Tibial artery (tissue), 4 donors: ENCODE measurements at regions of chr17 and their contacts with region 1.

Region 1: DNA sequence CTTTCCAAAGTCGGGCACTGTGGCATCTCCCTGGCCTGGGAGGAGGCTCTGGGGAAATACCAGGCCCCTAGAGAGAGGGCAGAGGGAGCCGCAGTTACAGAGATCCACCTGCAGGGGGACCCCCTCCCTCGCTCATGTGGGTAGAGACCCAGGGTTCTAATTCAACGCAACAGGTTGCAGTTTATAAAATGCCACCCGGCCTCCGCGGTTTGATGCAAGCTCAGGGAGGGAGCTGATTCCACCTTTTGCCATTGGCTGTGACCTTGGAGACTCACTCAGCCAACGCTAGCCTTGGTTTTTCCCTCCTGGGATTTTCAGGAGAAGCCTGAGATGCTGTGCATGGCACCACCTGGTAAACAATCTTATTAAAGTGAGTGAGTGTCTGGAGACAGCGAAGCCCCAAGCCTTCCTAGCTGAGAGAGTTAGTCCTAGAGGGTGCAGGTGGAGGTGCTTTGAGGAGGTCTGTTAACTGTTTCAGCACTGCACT is 12.1 kb downstream of the TTLL6 start:
- DNase-seq: peak; percentile 38 to 76
- H3K4me3 ChIP-seq: no peak overlapping the region
- H3K27ac ChIP-seq: no peak overlapping the region
- H3K4me1 ChIP-seq: no peaks in the 10 kb centered on the region
- H3K27me3 ChIP-seq: peaks cover 0 to 26% of the 10 kb centered on the region in 2 donors
- CTCF ChIP-seq: peak; percentile 93 to 95

Region 2: DNA sequence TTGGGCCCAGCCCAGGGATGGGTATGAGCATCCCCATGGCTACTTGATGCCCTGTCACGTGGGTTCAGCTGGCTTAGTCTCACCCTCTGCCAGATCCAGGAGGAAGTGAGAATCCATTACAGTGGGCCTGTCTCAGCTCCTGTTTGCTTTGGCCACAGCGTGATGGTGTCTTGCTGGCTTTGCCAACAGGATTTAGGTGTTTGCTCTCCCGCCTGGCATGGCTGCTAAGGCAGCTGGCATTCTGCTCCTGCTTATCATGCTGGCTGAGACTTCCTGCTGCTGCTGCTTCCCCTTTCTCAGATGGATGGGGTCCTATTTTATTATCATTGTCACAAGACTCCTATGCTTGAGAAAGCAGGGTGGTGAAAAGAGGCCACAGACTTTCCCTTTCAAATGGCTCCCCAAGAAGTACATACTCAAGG is 48.1 kb before region 1 on chr17:
- intact Hi-C with region 1: no loop called
- DNase-seq: no peak
- H3K4me3 ChIP-seq: no peak overlapping the region
- H3K27ac ChIP-seq: no peak overlapping the region
- H3K4me1 ChIP-seq: peaks cover 0 to 19% (median 10%) of the 10 kb centered on the region in 4 donors
- H3K27me3 ChIP-seq: peaks cover 10 to 99% of the 10 kb centered on the region in 2 donors
- CTCF ChIP-seq: no peak

Region 3: DNA sequence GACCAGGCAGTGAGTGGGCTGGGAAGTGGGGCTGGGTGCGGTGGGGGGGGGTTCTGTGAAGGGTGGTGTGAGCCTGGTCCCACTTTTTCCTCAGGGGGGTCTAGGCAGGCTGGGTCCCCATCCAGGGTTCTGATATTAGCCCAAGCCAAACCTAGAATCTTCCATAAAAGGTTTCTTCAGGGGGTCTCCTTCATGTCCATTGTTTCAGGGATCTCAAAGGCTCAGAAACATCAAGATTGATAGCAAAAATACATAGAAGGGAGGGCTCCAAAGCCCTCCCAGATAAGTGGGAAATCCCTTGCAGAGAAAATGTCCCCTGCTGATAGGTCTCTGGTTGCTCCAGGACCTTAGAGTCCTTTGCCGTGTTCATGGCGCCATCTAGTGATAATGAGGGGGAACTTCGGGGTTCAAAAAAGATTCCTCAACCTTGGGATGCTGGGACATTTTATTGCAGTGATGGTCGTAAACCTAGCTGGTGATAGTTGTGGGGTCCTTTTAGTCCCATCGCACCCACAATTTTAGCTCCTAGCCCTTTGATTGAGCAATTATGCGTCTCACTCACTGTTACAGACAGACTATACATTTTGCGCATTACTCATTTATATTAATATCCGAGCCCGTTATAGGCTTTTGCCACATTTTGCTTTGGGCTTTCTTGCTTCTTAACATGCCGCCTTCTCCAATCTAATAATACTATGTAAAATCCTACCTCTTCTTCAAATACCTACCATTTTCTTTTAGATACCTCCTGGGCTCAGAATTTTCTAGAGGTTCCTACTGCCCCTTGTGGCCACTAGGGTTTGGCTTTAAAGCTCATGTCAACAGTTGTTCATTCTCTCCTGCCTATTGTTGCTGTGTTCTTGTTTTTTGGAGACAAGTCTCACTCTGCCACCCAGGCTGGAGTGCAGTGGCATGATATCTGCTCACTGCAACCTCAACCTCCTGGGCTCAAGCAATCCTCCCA is 227.3 kb after region 1 on chr17:
- intact Hi-C with region 1: loop called (anchors 5 kb)
- DNase-seq: no peak
- H3K4me3 ChIP-seq: no peak overlapping the region
- H3K27ac ChIP-seq: no peak overlapping the region
- H3K4me1 ChIP-seq: peaks cover 0 to 5% (median 2%) of the 10 kb centered on the region in 4 donors
- H3K27me3 ChIP-seq: peaks cover 0 to 27% of the 10 kb centered on the region in 2 donors
- CTCF ChIP-seq: peak; percentile 49 to 62